A673 (cell line): ENCODE measurements at regions of chr3 and their contacts with region 1.

Region 1: GRCh38 chr3:117306299-117306698 is 596.7 kb downstream of the TUSC7 start:
- DNase-seq: no peak
- H3K4me3 ChIP-seq: no peak overlapping the region
- H3K27ac ChIP-seq: no peak overlapping the region
- H3K4me1 ChIP-seq: peaks cover 41% of the 10 kb centered on the region
- H3K27me3 ChIP-seq: no peaks in the 10 kb centered on the region
- CTCF ChIP-seq: no peak

Region 2: DNA sequence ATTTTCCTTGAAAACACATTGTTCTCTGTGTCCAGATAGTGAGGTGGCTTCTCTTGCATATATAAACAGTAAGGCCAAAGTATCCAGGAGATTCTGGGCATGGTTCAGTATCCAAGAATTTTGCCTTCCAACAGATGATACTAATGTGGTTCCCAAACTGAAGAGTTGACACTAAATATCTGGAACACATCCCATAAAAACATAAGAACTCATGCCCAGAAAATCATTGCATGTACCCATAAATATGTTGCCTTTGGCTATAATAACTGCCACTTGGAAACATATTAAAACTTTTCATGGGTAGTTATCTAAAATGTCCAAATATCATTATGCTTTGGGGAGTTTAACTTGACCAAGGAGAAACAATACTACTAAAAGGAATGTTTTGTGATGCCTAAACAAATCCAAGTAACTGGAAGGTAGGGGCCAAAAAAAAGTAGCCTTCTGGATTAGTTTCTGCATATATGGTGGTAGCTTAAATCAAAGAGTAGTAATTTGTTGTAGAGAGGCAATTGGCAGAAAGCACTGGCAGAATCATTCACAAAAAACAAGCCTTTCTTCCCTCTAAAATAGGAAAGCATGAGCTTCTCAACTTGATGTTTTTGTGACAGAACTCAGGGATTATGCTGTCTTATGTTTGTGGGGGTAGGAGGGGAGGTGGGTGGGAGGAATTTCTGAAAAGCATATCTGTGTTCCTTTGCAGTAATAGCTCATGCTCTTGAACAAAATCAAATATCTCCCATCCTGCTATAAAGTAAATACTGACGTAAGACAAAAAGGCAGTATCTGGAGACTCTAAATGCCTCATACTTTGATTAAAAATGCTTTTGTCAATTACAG is 157.2 kb after region 1 on chr3:
- CTCF ChIA-PET with region 1: no interaction called
- POLR2A ChIA-PET with region 1: interaction called, 10 read pairs
- intact Hi-C with region 1: no loop called
- DNase-seq: no peak
- H3K4me3 ChIP-seq: no peak overlapping the region
- H3K27ac ChIP-seq: no peak overlapping the region
- H3K4me1 ChIP-seq: no peaks in the 10 kb centered on the region
- H3K27me3 ChIP-seq: no peaks in the 10 kb centered on the region
- CTCF ChIP-seq: no peak